Activated CD4-positive, alpha-beta T cell treated with anti-CD3 and anti-CD28 coated beads for 36 hours (primary cell): ENCODE measurements at regions of chr12 and their contacts with region 1.

Region 1: DNA sequence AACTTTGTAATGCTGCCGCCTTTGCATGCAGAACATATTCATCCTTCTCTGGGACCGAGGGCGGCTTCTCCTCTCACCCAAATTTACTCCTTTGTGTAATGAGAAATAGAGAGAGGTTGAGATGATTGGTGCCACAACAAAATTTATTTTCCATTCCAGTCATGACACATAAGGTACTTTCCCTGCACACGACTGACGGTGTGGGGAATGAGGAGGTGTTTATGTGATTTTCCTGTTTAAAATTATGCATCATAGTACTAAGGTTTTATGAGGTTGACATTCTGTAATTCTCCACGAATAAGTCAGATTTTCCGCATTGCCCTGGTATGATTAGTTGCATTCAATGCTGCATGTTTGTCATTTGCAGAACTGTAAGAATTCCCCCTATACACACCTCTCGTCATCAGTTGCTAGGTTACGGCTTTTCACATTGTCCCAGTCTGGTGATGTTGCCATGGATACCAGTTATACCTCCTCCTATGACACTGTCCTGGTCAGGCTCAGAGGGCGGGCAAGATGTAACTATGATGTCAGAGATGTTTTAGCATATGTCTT is 23.1 kb downstream of the BICDL1 start:
- DNase-seq: peak; percentile 87
- ATAC-seq: peak; percentile 70
- H3K4me3 Mint-ChIP-seq: peak overlapping the region; percentile 65
- H3K27ac Mint-ChIP-seq: peak overlapping the region; percentile 99
- H3K4me1 Mint-ChIP-seq: peaks cover 91% of the 10 kb centered on the region
- H3K27me3 Mint-ChIP-seq: no peaks in the 10 kb centered on the region

Region 2: DNA sequence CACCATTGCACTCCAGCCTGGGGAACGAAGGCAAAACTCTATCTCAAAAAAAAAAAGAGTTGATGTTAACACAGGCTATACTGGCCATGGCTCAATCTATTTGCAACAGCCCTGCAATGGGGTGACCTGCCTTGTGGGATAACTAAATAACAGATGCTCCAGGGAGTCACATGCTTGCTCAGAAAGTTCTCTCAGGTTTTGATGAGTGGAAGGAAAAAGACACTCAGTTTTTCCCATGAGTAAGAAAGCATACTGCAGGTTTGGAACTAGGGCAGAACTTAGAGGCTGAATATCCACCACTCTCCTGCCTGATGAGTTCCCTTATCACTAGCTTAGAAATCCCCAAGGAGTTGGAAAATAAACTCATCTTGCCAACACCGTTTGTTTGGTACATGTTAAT is 1968.1 kb before region 1 on chr12:
- CTCF ChIA-PET with region 1: no interaction called
- POLR2A ChIA-PET with region 1: interaction called, 5 read pairs
- intact Hi-C with region 1: loop called in 1 of 2 experiments (anchors 10 kb)
- DNase-seq: peak; percentile 51
- ATAC-seq: peak; percentile 67
- H3K4me3 Mint-ChIP-seq: peak overlapping the region; percentile 33
- H3K27ac Mint-ChIP-seq: peak overlapping the region; percentile 97
- H3K4me1 Mint-ChIP-seq: peaks cover 53% of the 10 kb centered on the region
- H3K27me3 Mint-ChIP-seq: no peaks in the 10 kb centered on the region

Region 3: DNA sequence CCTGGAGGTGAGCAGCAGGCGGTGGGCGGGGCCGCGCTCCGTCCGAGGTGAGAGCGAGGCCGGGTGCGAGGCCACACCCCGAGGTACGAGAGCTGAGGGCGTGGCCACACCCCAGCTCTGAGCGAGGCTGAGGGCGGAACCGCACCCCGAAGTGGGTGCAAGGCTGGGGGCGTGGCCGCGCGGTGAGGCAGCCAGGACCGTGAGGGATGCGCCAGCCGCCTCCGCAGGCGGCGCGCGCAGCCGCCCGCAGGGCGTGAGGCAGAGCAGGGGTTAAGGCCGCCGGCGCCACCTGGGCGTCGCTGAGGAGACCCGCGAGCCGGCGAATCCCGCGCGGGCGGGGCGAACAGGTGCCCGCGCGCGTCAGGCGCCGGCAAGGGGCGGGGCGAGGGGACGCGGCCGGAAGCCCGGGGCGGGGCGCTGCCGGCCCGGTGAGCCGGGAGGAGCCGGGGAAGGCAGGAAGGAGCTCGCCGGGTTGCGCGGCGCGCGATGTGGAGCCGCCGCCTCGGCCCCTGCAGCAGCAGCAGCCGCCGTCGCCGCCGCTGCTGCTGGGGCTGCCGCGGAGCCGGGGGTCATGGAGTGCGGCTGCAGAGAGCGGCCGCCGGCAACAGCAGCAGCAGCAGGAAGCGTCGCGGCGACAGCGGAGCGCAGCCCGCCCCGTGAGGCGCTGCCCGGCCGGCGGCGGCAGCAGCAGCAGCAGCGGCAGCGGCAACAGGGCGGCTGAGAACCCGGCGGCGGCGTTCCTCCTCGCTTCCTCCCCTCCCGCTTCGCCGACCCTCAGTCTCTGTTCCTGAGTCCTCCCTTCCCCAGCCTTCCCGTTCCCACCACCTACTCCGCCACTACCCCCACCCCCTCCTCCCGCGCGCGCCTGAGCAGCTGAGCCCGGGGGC is 23.1 kb before region 1 on chr12 and contains the start of gene BICDL1:
- CTCF ChIA-PET with region 1: interaction called, 16 read pairs
- POLR2A ChIA-PET with region 1: interaction called, 98 read pairs
- intact Hi-C with region 1: loop called (anchors 1 kb)
- DNase-seq: peak; percentile 99
- ATAC-seq: peak; percentile 87
- H3K4me3 Mint-ChIP-seq: peak within 1 kb of the TSS; percentile 90
- H3K27ac Mint-ChIP-seq: peak within 1 kb of the TSS; percentile 92
- H3K4me1 Mint-ChIP-seq: peaks cover 46% of the 10 kb centered on the region
- H3K27me3 Mint-ChIP-seq: no peaks in the 10 kb centered on the region
- total RNA-seq, gene BICDL1: 106 to 132 TPM

Region 4: DNA sequence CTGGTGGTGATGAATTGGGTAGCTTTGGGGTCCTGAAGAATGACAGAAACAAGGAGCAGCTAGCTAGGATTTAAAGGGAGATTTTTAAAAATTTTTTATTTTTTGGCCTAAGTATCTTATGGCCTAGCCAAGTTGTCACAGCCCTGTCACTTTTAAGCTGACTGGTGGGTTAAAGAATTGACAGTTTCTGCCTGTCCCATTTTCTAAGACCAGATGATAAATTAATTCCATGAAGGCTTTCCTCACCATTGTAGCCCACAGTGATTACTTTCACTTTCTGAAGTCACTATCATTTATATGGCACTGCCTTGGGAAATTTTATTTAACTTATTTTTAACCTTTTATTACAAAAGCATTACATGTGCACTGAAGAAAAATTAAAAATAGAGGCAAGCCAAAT is 20.1 kb after region 1 on chr12:
- CTCF ChIA-PET with region 1: interaction called, 4 read pairs
- POLR2A ChIA-PET with region 1: interaction called, 3 read pairs
- intact Hi-C with region 1: loop called in 1 of 2 experiments (anchors 2 kb)
- DNase-seq: no peak
- ATAC-seq: peak; percentile 57
- H3K4me3 Mint-ChIP-seq: no peak overlapping the region
- H3K27ac Mint-ChIP-seq: peak overlapping the region; percentile 68
- H3K4me1 Mint-ChIP-seq: peaks cover 28% of the 10 kb centered on the region
- H3K27me3 Mint-ChIP-seq: no peaks in the 10 kb centered on the region

Region 5: GRCh38 chr12:120116792-120117651 is 104.9 kb after region 1 on chr12:
- CTCF ChIA-PET with region 1: interaction called, 6 read pairs
- POLR2A ChIA-PET with region 1: interaction called, 55 read pairs
- intact Hi-C with region 1: loop called (anchors 1 kb)
- DNase-seq: peak; percentile 99
- ATAC-seq: peak; percentile 68
- H3K4me3 Mint-ChIP-seq: peak overlapping the region; percentile 85
- H3K27ac Mint-ChIP-seq: peak overlapping the region; percentile 87
- H3K4me1 Mint-ChIP-seq: peaks cover 77% of the 10 kb centered on the region
- H3K27me3 Mint-ChIP-seq: no peaks in the 10 kb centered on the region

Region 6: GRCh38 chr12:120437754-120438494 is 425.8 kb after region 1 on chr12 and contains the start of gene COX6A1:
- CTCF ChIA-PET with region 1: no interaction called
- POLR2A ChIA-PET with region 1: no interaction called
- intact Hi-C with region 1: loop called in 1 of 2 experiments (anchors 5 kb)
- DNase-seq: peak; percentile 99
- ATAC-seq: peak; percentile 97
- H3K4me3 Mint-ChIP-seq: peak within 1 kb of the TSS; percentile 99
- H3K27ac Mint-ChIP-seq: peak within 1 kb of the TSS; percentile 99
- H3K4me1 Mint-ChIP-seq: peaks cover 23% of the 10 kb centered on the region
- H3K27me3 Mint-ChIP-seq: peaks cover 4% of the 10 kb centered on the region
- total RNA-seq, gene COX6A1: 424 to 495 TPM